HepG2 (cell line): ENCODE measurements at regions of chr21 and their contacts with region 1.

Region 1: DNA sequence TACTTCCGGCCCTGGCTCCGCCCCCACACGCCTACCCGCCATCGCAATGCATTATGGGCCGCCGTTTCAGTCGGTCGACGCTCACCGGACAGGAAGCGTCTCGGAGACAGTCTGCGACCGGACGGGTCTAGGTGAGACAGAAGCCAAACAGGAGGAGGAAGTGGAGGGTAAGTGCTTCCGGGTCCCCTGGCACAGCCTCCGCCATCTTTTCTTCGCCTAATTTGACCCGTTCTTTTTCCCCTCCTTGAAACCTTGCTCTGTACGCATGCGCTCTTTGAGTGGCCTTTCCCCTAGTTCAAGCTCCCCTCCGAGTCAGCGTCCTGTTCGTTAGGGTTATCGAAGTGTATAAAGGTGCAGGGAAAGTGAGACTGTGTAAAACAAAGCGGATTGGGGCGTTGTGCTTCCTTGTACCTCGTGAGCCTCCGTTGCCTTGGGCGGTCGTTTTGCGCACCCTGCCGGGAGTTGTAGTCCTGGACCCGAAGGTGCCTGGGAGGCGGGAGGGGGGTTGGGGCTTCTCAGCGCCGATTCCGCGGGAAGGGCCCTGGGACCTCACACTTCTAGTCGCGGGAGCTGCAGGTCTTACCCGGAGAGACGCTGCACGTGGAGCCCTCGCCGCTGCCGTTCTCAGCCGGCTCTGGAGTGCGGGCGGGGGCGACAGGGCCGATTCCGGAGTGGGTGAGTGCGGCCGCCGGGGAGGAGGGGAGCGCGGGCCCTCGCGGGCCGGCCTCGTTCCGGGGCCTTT is at the starts of genes ATP5PF and GABPA:
- DNase-seq: peak; percentile 97
- ATAC-seq: peak; percentile 93
- H3K4me3 ChIP-seq: peak within 1 kb of the TSS; percentile 72 to 100 (median 96)
- H3K27ac ChIP-seq: peak within 1 kb of the TSS; percentile 100
- H3K4me1 ChIP-seq: peaks cover 32% of the 10 kb centered on the region
- H3K27me3 ChIP-seq: no peaks in the 10 kb centered on the region; a peak in 1 of 5 replicates
- CTCF ChIP-seq: peak; percentile 26
- EP300 ChIP-seq: no peak; a peak in 1 of 4 replicates
- POLR2A ChIP-seq: peak; percentile 50 to 73; a peak in 3 of 4 replicates
- RAD21 ChIP-seq: no peak; the same call in 1 of the 2 replicates
- total RNA-seq, gene ATP5PF: 131 and 196 TPM in 2 replicates
- total RNA-seq, gene GABPA: 13.2 and 19.7 TPM in 2 replicates

Region 2: GRCh38 chr21:25254491-25255174 is 480.4 kb before region 1 on chr21:
- CTCF ChIA-PET with region 1: no interaction called
- POLR2A ChIA-PET with region 1: no interaction called
- in situ Hi-C with region 1: no loop called
- intact Hi-C with region 1: no loop called
- DNase-seq: no peak
- ATAC-seq: no peak
- H3K4me3 ChIP-seq: no peak overlapping the region
- H3K27ac ChIP-seq: no peak overlapping the region
- H3K4me1 ChIP-seq: no peaks in the 10 kb centered on the region
- H3K27me3 ChIP-seq: no peaks in the 10 kb centered on the region
- CTCF ChIP-seq: no peak
- EP300 ChIP-seq: no peak
- POLR2A ChIP-seq: no peak
- RAD21 ChIP-seq: no peak

Region 3: GRCh38 chr21:25790122-25790877 is 55.2 kb after region 1 on chr21:
- CTCF ChIA-PET with region 1: no interaction called
- POLR2A ChIA-PET with region 1: no interaction called
- in situ Hi-C with region 1: no loop called
- intact Hi-C with region 1: no loop called
- DNase-seq: peak; percentile 19
- ATAC-seq: peak; percentile 90
- H3K4me3 ChIP-seq: peak overlapping the region; percentile 44 to 55 (median 49); a peak in 5 of 6 replicates
- H3K27ac ChIP-seq: no peak overlapping the region
- H3K4me1 ChIP-seq: peaks cover 14% of the 10 kb centered on the region; the same call in 1 of the 2 replicates
- H3K27me3 ChIP-seq: no peaks in the 10 kb centered on the region; a peak in 1 of 5 replicates
- CTCF ChIP-seq: peak; percentile 54
- EP300 ChIP-seq: no peak
- POLR2A ChIP-seq: no peak
- RAD21 ChIP-seq: no peak

Region 4: DNA sequence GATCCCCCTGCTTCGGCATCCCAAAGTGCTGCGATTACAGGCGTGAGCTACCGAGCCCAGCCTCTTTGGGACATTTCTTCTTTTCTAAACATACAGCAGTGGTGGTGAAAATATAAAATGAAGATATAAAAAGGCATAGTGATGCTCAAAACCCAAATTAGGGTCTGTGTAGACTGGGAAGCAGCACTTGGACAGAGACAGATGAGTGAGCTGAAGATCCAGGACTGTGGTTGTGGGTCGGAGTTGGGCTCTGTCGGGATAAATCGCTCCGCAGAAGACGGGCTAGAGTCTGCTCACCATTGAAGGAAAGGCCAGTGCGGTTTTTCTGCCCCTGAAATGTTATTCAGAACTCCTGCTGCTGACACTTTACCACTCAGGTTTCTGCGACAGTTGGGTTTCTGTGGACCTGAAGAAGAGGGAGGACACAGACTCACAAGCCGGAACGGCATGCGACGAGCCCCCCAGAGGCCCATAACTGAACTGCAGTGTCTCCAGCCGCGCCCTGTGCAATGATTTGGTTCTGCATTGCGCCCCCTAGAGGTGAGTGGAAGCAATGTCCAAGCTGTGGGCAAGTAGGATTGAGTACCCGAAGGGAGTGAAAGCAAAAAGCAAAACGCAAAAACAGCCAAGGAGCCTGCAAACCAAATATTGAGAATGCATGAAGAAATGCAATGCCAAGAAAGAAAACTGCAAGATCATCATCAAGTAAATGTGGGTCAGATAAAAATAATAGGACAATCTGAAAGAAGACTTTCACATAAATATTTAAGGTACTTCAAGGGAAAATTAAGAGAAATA is 66.3 kb after region 1 on chr21:
- CTCF ChIA-PET with region 1: interaction called, 5 read pairs
- POLR2A ChIA-PET with region 1: no interaction called
- in situ Hi-C with region 1: no loop called
- intact Hi-C with region 1: loop called (anchors 2 kb)
- DNase-seq: peak; percentile 86
- ATAC-seq: peak; percentile 100
- H3K4me3 ChIP-seq: peak overlapping the region in 1 of 3 experiments; percentile 40; a peak in 1 of 6 replicates
- H3K27ac ChIP-seq: no peak overlapping the region
- H3K4me1 ChIP-seq: no peaks in the 10 kb centered on the region
- H3K27me3 ChIP-seq: no peaks in the 10 kb centered on the region
- CTCF ChIP-seq: peak; percentile 97
- EP300 ChIP-seq: no peak
- POLR2A ChIP-seq: no peak
- RAD21 ChIP-seq: no peak; the same call in 1 of the 2 replicates

Region 5: DNA sequence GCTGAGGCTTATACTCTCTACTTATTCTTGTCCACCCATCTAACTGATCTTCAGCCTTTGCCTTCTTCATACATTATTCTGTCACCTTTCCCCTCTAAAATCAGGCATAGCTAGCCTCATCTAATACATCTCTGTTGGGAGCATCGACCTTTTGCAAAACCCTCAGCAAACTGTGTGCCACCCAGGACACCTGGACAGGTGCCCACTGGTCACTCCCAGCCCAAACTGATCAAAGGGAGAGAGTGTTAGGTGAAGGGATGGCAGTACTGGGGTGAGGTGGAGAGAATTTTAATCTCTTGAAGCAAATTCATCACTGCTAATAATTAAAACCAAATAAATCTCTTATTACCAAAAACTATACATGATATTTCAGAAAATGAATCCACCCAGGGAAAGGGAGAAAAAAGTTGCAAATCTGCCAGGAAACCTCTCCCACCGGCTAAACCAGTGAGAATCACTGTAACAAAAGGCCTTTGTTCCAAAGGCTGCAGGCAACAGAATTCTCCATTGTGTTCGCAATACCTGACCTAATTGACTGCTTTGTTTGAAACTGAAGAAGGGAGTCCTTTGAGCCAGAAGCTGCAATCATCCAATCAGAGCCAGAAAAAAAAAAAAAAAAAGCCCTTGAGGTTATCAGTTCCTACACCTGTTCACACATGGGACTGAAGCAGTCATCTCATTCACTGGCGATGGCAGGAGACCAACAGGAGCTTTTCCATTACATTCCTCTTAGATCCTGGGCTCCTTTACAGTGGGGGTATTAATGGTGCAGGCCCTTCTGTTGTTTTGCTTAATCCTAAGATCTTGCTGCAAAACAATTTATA is 262.9 kb after region 1 on chr21:
- CTCF ChIA-PET with region 1: no interaction called
- POLR2A ChIA-PET with region 1: no interaction called
- in situ Hi-C with region 1: no loop called
- intact Hi-C with region 1: loop called (anchors 5 kb)
- DNase-seq: peak; percentile 88
- ATAC-seq: peak; percentile 88
- H3K4me3 ChIP-seq: no peak overlapping the region
- H3K27ac ChIP-seq: peak overlapping the region; percentile 25
- H3K4me1 ChIP-seq: peaks cover 22% of the 10 kb centered on the region
- H3K27me3 ChIP-seq: no peaks in the 10 kb centered on the region
- CTCF ChIP-seq: no peak
- EP300 ChIP-seq: peak in 1 of 2 experiments; percentile 42; a peak in 2 of 4 replicates
- POLR2A ChIP-seq: no peak
- RAD21 ChIP-seq: no peak